ENCODE measurements at regions of chr17 and their contacts with region 1.

Region 1: DNA sequence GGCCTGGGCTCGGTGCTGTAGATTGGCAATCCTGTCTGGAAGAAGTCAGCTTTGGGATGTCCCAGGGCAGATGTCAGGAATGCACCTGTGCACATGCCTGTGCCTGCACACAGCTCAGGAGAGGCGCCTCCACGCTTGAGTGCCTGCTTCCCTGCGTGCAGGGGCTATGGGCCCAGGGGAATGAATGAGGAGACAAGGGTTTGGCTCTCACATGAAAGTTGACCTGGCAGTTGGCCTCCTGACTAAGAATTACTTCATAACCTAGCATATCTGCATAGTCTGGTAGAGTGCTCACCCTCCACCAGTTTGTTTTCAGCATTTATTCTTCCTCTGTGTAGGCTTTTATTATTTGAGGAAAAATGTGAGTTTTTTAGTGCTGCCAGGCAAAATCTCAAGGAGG is 50.0 kb downstream of the PLD6 start:
- DNase-seq: peak; percentile 82
- H3K4me3 ChIP-seq: no peak overlapping the region
- H3K27ac ChIP-seq: peak overlapping the region; percentile 40
- H3K4me1 ChIP-seq: peaks cover 53% of the 10 kb centered on the region
- H3K27me3 ChIP-seq: no peaks in the 10 kb centered on the region
- CTCF ChIP-seq: no peak

Region 2: GRCh38 chr17:17098426-17099179 is 57.5 kb before region 1 on chr17:
- CTCF ChIA-PET with region 1: no interaction called
- dilution Hi-C with region 1: no loop called
- in situ Hi-C with region 1: no loop called
- intact Hi-C with region 1: no loop called
- DNase-seq: no peak
- H3K4me3 ChIP-seq: no peak overlapping the region
- H3K27ac ChIP-seq: no peak overlapping the region
- H3K4me1 ChIP-seq: peaks cover 31% of the 10 kb centered on the region
- H3K27me3 ChIP-seq: no peaks in the 10 kb centered on the region
- CTCF ChIP-seq: no peak

Region 3: DNA sequence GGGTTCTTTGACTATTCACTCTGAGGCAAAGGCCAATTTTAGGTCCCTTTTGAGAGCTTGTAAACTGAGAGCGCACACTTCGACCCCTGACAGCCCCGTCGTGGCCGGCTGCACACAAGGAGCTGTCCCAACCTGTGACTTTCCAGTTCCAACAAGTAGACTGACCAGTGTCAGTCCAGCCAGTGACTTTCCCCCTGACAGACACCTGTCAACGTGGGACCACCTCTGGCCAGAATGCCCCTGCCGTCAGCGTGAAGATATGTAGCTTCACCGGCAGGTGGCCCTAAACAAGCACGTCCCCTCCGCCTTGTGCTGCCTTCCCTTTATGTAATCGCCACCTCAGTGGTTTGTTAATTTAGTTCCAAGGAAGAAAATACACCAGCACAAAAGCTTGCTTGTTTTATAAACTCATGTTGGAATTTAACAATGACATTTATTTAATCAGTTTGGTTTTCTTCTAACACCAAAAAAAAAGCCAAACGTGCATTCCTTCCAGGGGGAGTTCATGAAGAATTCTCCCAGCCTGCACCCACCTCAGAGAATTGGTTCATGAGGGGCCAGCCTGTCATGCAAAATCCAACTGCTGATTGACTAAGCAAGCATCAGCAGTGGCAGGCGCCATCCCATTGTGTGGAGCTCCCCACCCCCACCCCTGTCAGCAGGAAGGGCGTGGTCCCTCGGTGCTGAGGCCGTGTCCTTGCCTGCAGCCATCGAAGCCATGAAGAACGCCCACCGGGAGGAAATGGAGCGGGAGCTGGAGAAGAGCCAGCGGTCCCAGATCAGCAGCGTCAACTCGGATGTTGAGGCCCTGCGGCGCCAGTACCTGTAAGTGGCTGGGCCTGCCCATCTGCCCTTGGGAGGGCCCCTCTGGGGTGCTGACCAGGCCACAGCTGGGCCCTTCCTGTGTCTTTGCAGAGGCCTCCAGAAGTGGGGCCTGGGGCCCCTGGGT is 16.2 kb after region 1 on chr17:
- CTCF ChIA-PET with region 1: no interaction called
- dilution Hi-C with region 1: no loop called
- in situ Hi-C with region 1: no loop called
- intact Hi-C with region 1: no loop called
- DNase-seq: no peak
- H3K4me3 ChIP-seq: no peak overlapping the region
- H3K27ac ChIP-seq: no peak overlapping the region
- H3K4me1 ChIP-seq: peaks cover 40% of the 10 kb centered on the region
- H3K27me3 ChIP-seq: no peaks in the 10 kb centered on the region
- CTCF ChIP-seq: peak; percentile 15 to 36

Region 4: GRCh38 chr17:17303010-17303846 is 147.1 kb after region 1 on chr17 and contains the start of gene NT5M:
- CTCF ChIA-PET with region 1: no interaction called
- dilution Hi-C with region 1: no loop called
- in situ Hi-C with region 1: no loop called
- intact Hi-C with region 1: loop called (anchors 5 kb)
- DNase-seq: peak; percentile 59
- H3K4me3 ChIP-seq: peak within 1 kb of the TSS; percentile 53 to 61 (median 56)
- H3K27ac ChIP-seq: no peak within 1 kb of the TSS
- H3K4me1 ChIP-seq: peaks cover 12% of the 10 kb centered on the region
- H3K27me3 ChIP-seq: no peaks in the 10 kb centered on the region
- CTCF ChIP-seq: no peak
- total RNA-seq, gene NT5M: 3.2 to 3.8 TPM

Region 5: DNA sequence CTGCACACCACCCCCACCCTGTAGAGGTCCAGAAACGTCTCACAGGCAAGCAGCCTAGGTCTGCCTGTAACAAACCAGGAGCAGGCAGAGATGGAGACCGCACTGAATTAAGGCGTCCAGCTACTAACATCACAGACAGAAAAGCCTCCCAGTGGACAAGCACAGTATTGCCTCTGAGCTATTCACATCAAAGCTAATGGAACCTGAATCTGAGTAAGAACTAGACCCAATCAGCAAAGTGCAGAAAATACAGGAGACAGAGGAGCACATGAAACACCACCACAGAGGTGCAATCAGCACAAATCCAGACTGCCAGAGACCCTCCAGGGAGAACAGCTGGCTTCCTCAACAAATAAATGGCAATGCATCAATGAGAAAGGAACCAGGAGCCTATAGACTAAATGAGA is 457.6 kb after region 1 on chr17:
- CTCF ChIA-PET with region 1: no interaction called
- dilution Hi-C with region 1: no loop called
- in situ Hi-C with region 1: no loop called
- intact Hi-C with region 1: no loop called
- DNase-seq: peak; percentile 62
- H3K4me3 ChIP-seq: no peak overlapping the region
- H3K27ac ChIP-seq: no peak overlapping the region
- H3K4me1 ChIP-seq: no peaks in the 10 kb centered on the region
- H3K27me3 ChIP-seq: no peaks in the 10 kb centered on the region
- CTCF ChIP-seq: peak; percentile 78 to 90